Endothelial cell of umbilical vein (primary cell): ENCODE measurements at regions of chr12 and their contacts with region 1.

Region 1: DNA sequence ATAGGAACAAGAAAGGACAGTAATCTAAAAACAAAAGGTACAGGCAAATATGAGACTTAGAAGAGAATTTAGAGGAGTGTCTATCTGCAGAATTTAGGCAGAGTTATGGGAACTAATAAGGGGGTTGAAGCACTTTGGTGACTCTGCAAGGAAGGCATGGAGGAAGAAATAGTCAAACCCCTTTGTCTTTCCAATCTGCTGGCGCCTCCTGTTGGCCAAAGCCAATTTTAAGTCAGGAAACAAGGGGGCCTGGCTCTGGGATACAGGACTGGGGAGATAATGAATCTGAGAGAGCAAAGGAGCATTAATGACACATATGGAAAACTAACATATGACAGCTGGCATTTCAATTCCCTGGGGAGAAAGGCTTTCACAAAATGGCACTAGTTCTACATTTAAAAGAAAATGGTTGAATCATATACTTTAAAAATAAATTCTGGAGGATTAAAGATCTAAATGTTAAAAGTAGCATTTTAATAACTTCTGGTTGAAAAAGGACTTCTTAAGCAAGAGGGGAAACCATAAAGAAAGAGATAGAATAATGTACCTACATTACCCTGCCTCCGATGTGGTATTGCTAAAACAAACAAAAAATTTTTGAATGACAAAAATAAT is 48.5 kb upstream of the CSRP2 start:
- DNase-seq: peak; percentile 28
- H3K4me3 ChIP-seq: no peak overlapping the region
- H3K27ac ChIP-seq: no peak overlapping the region
- H3K4me1 ChIP-seq: no peaks in the 10 kb centered on the region
- H3K27me3 ChIP-seq: peaks cover 0 to 5% of the 10 kb centered on the region in 2 experiments
- CTCF ChIP-seq: peak; percentile 38 to 52
- POLR2A ChIP-seq: no peak

Region 2: DNA sequence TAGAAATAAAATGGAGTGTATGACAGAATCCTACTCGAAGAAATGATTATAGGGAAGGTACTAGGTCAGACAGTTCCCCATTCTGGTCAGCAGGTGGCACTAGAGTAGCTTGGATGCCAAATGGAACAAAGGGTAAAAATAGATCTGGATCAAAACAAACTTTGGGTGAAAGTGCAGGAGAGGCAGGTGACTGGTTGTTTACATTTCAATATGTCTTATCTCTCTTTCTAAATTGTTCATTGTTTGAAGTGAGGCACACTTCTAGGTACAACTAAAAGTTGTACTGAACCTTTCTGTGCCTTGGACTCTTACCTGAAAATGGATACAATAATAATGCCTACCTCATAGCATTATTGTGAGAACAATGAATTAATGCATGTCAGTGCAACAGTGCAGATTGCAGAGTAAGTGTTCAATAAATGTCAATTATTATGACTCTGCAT is 305.7 kb before region 1 on chr12:
- CTCF ChIA-PET with region 1: interaction called, 7 read pairs
- POLR2A ChIA-PET with region 1: no interaction called
- dilution Hi-C with region 1: no loop called
- intact Hi-C with region 1: loop called (anchors 1 kb)
- DNase-seq: peak; percentile 75
- H3K4me3 ChIP-seq: no peak overlapping the region
- H3K27ac ChIP-seq: no peak overlapping the region
- H3K4me1 ChIP-seq: peaks cover 2% of the 10 kb centered on the region
- H3K27me3 ChIP-seq: peaks cover 0 to 2% of the 10 kb centered on the region in 2 experiments
- CTCF ChIP-seq: peak; percentile 72 to 77
- POLR2A ChIP-seq: no peak

Region 3: GRCh38 chr12:76790564-76791552 is 136.4 kb before region 1 on chr12:
- CTCF ChIA-PET with region 1: no interaction called
- POLR2A ChIA-PET with region 1: no interaction called
- dilution Hi-C with region 1: no loop called
- intact Hi-C with region 1: loop called (anchors 5 kb)
- DNase-seq: peak; percentile 46
- H3K4me3 ChIP-seq: no peak overlapping the region
- H3K27ac ChIP-seq: no peak overlapping the region
- H3K4me1 ChIP-seq: no peaks in the 10 kb centered on the region
- H3K27me3 ChIP-seq: no peaks in the 10 kb centered on the region
- CTCF ChIP-seq: peak; percentile 16 to 17
- POLR2A ChIP-seq: no peak

Region 4: GRCh38 chr12:76878899-76879709 is 48.2 kb before region 1 on chr12 and contains the start of gene CSRP2:
- CTCF ChIA-PET with region 1: no interaction called
- POLR2A ChIA-PET with region 1: no interaction called
- dilution Hi-C with region 1: no loop called
- intact Hi-C with region 1: loop called (anchors 2 kb)
- DNase-seq: peak; percentile 86
- H3K4me3 ChIP-seq: peak within 1 kb of the TSS; percentile 83 to 92 (median 89)
- H3K27ac ChIP-seq: peak within 1 kb of the TSS; percentile 81
- H3K4me1 ChIP-seq: peaks cover 9% of the 10 kb centered on the region
- H3K27me3 ChIP-seq: no peaks in the 10 kb centered on the region
- CTCF ChIP-seq: peak in 1 of 2 donors; percentile 16
- POLR2A ChIP-seq: peak; percentile 66
- total RNA-seq, gene CSRP2: 12.7 and 13.4 TPM in 2 replicates

Region 5: DNA sequence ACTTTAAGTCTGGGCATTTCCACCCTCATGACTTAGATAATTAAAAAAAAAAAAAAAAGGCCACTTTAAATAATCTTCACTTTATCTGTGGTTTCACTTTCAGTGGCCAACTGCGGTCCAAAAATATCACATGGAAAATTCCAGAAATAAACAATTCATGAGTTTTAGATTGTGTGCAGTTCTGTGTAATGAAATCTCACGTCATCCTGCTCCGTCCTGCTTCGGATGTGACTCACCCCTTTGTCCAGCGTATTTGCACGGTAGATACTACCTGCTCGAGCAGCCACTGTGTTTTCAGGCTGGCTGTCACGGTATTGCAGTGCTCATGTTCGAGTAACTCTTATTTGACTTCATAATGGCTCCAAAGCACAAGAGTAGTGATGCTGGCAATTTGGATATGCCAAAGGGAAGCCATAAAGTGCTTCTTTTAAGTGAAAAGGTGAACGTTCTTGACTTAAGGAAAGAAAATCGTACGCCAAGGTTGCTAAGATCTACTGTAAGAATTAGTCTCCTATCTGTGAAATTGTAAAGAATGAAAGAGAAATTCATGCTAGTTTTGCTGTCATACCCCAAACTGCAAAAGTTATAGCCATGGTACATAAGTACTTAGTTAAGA is 135.7 kb after region 1 on chr12:
- CTCF ChIA-PET with region 1: no interaction called
- POLR2A ChIA-PET with region 1: no interaction called
- dilution Hi-C with region 1: no loop called
- intact Hi-C with region 1: no loop called
- DNase-seq: peak; percentile 70
- H3K4me3 ChIP-seq: peak overlapping the region in 1 of 3 experiments; percentile 15
- H3K27ac ChIP-seq: peak overlapping the region; percentile 61
- H3K4me1 ChIP-seq: peaks cover 30% of the 10 kb centered on the region
- H3K27me3 ChIP-seq: no peaks in the 10 kb centered on the region
- CTCF ChIP-seq: no peak
- POLR2A ChIP-seq: no peak

Region 6: GRCh38 chr12:77087427-77087826 is 160.2 kb after region 1 on chr12:
- CTCF ChIA-PET with region 1: no interaction called
- POLR2A ChIA-PET with region 1: no interaction called
- dilution Hi-C with region 1: no loop called
- intact Hi-C with region 1: no loop called
- DNase-seq: peak; percentile 38
- H3K4me3 ChIP-seq: no peak overlapping the region
- H3K27ac ChIP-seq: no peak overlapping the region
- H3K4me1 ChIP-seq: no peaks in the 10 kb centered on the region
- H3K27me3 ChIP-seq: no peaks in the 10 kb centered on the region
- CTCF ChIP-seq: no peak
- POLR2A ChIP-seq: no peak